ENCODE measurements at regions of chr15 and their contacts with region 1.

Region 1: GRCh38 chr15:78714890-78715289 is 73.9 kb upstream of the CHRNB4 start:
- DNase-seq: no peak
- ATAC-seq: no peak
- H3K4me3 ChIP-seq: no peak overlapping the region
- H3K27ac ChIP-seq: no peak overlapping the region
- H3K4me1 ChIP-seq: no peaks in the 10 kb centered on the region
- H3K27me3 ChIP-seq: peaks cover 0 to 18% (median 0%) of the 10 kb centered on the region in 9 donors
- CTCF ChIP-seq: no peak
- POLR2A ChIP-seq: no peak

Region 2: DNA sequence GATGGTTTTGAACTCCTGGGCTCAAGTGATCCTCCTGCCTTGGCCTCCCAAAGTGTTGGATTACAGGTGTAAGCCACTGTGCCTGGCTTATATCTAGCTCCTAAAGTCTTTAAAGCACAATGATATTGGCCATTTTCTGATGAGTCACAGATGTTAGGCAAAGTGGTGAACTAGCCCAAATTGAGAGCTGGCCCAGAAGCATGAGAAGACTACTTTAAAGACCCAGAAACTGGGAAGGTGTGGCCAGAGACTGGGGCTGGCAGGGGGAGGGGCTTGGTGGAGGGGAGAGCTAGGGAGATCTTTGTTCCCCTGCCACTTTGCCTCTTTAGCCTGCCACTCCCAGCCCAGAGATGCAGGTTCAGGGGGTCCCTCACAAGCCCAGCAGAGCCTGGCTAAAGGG is 115.7 kb before region 1 on chr15:
- intact Hi-C with region 1: no loop called
- DNase-seq: no peak
- ATAC-seq: no peak
- H3K4me3 ChIP-seq: no peak overlapping the region
- H3K27ac ChIP-seq: no peak overlapping the region
- H3K4me1 ChIP-seq: no peaks in the 10 kb centered on the region
- H3K27me3 ChIP-seq: no peaks in the 10 kb centered on the region
- CTCF ChIP-seq: no peak
- POLR2A ChIP-seq: no peak

Region 3: DNA sequence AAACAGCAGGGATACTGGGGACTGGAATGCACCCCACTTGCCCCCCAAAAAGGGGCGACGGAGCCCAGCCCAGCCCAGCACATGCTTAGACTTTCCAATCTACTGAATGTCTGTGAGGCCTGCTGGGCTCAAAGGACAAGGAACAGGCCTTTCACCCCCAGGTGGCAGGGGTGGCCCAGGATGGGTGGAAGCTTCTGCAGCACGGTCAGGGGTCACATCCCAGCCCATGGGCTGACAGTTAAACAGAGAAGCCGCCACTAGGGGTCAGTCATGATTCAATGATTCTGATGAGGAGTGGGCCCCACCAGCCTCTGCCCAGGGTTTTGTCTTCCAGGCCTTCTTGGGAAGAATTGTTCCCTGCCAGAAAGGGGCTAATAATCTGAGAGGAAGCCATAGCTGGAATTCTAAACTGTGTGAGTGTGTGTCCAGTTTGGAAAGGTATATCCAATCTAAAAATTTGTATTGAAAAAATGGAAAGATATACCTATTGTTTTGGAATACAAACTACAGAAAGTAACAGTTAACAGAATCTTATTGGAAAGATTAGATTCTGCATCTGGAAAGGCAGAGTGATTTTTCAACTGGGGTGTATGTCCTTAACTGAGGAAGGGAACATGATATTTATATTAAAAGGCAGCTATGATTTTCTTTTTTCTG is 76.1 kb before region 1 on chr15:
- intact Hi-C with region 1: loop called in 1 of 10 experiments (anchors 5 kb)
- DNase-seq: peak in 3 of 5 donors; percentile 42 to 48 (median 47)
- ATAC-seq: peak in 3 of 4 donors; percentile 56 to 73 (median 70)
- H3K4me3 ChIP-seq: no peak overlapping the region
- H3K27ac ChIP-seq: no peak overlapping the region
- H3K4me1 ChIP-seq: peaks cover 0 to 16% (median 6%) of the 10 kb centered on the region in 12 donors
- H3K27me3 ChIP-seq: peaks cover 0 to 15% (median 6%) of the 10 kb centered on the region in 9 donors
- CTCF ChIP-seq: peak; percentile 48 to 76 (median 61)
- POLR2A ChIP-seq: no peak

Region 4: DNA sequence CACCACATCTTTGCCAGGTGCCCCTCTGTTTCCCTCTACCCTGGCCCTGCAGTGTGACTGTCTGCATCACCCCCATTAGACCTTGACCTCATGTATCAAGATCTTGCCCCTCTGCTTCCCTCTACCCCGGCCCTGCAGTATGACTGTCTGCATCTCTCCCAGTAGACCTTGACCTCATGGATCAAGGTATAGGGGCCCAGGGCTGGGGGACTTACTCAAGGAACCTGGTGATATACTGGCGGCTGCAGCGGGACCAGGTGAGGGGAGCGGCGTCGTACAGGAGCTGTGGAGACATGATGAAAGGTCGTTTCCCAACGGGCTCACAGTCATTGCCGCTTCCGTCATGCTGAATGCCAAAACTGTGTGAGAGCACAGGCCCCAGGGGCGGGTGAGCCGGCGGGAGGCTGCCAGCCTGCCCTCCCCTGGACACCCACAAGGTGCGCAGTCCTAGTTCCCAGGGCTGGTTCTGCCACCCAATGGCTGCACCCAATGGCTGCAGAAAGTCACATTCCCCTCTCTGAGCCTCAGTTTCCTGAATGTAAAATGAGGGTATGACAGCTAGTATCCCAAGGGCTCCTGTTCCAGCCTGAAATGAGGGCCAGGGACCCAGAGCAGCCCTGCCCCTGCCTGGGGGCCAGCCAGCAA is 73.2 kb after region 1 on chr15:
- intact Hi-C with region 1: no loop called
- DNase-seq: peak in 1 of 5 donors; percentile 33
- ATAC-seq: no peak
- H3K4me3 ChIP-seq: no peak overlapping the region
- H3K27ac ChIP-seq: no peak overlapping the region
- H3K4me1 ChIP-seq: peaks cover 0 to 13% (median 0%) of the 10 kb centered on the region in 12 donors
- H3K27me3 ChIP-seq: no peaks in the 10 kb centered on the region
- CTCF ChIP-seq: no peak
- POLR2A ChIP-seq: no peak

Measured in heart left ventricle (tissue), 16 donors.